ENCODE measurements at regions of chr12 and their contacts with region 1.

Region 1: GRCh38 chr12:65169320-65170208 is at the start of gene LEMD3:
- DNase-seq: peak; percentile 99
- H3K4me3 ChIP-seq: peak within 1 kb of the TSS; percentile 76 to 98 (median 91)
- H3K27ac ChIP-seq: peak within 1 kb of the TSS; percentile 94 to 98 (median 97)
- H3K4me1 ChIP-seq: peaks cover 32 to 53% (median 47%) of the 10 kb centered on the region in 6 donors
- H3K27me3 ChIP-seq: no peaks in the 10 kb centered on the region
- CTCF ChIP-seq: peak in 3 of 11 experiments; percentile 2 to 20 (median 7)
- POLR2A ChIP-seq: peak in 1 of 3 donors; percentile 84
- total RNA-seq, gene LEMD3: 40.4 to 58.9 (median 42.5) TPM

Region 2: GRCh38 chr12:64840949-64841717 is 328.4 kb before region 1 on chr12:
- intact Hi-C with region 1: no loop called
- DNase-seq: no peak
- H3K4me3 ChIP-seq: no peak overlapping the region
- H3K27ac ChIP-seq: no peak overlapping the region
- H3K4me1 ChIP-seq: no peaks in the 10 kb centered on the region
- H3K27me3 ChIP-seq: no peaks in the 10 kb centered on the region
- CTCF ChIP-seq: no peak
- POLR2A ChIP-seq: no peak

Region 3: GRCh38 chr12:65209655-65210043 is 40.1 kb after region 1 on chr12:
- intact Hi-C with region 1: loop called (anchors 5 kb)
- DNase-seq: no peak
- H3K4me3 ChIP-seq: no peak overlapping the region
- H3K27ac ChIP-seq: peak overlapping the region in 7 of 8 donors; percentile 26 to 63 (median 56)
- H3K4me1 ChIP-seq: peaks cover 14 to 67% (median 47%) of the 10 kb centered on the region in 6 donors
- H3K27me3 ChIP-seq: no peaks in the 10 kb centered on the region
- CTCF ChIP-seq: no peak
- POLR2A ChIP-seq: no peak

Measured in spleen (tissue), 13 donors.